ENCODE measurements at regions of chr18 and their contacts with region 1.

Region 1: GRCh38 chr18:56952026-56952425 is 194.9 kb upstream of the BOD1L2 start:
- DNase-seq: no peak
- ATAC-seq: no peak
- H3K4me3 ChIP-seq: no peak overlapping the region
- H3K27ac ChIP-seq: no peak overlapping the region
- H3K4me1 ChIP-seq: no peaks in the 10 kb centered on the region
- H3K27me3 ChIP-seq: no peaks in the 10 kb centered on the region
- CTCF ChIP-seq: no peak
- POLR2A ChIP-seq: no peak

Region 2: DNA sequence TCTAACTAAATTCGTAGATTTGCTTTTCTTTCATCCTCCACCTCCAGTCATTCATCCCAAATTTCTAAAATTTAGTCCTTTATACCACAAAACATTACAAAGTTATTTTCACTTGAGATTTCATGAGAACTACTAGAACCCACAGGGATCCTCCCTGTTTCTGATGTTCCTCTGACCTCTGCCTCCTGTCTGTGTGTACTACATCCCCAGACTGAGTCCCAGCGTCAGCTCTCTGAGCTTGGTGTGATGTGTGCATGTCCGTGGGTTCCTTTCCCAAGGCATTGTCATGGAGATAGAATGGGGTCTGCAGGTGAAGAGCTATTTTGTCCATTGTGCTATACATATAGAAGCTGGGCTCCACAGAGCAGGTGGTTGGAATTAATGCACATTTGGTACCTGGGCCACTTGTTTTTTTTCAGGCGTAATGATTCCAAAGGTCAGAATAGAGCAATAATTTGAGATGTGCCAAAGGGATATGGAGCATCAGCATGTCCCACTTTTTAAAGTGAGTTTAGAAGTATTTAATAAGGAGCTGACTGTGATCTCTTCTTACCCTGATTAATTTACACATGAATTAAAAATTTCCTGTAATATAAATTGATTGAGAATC is 43.7 kb after region 1 on chr18:
- in situ Hi-C with region 1: no loop called
- intact Hi-C with region 1: no loop called
- DNase-seq: no peak
- ATAC-seq: no peak
- H3K4me3 ChIP-seq: no peak overlapping the region
- H3K27ac ChIP-seq: no peak overlapping the region
- H3K4me1 ChIP-seq: no peaks in the 10 kb centered on the region
- H3K27me3 ChIP-seq: no peaks in the 10 kb centered on the region
- CTCF ChIP-seq: no peak
- POLR2A ChIP-seq: no peak

Region 3: DNA sequence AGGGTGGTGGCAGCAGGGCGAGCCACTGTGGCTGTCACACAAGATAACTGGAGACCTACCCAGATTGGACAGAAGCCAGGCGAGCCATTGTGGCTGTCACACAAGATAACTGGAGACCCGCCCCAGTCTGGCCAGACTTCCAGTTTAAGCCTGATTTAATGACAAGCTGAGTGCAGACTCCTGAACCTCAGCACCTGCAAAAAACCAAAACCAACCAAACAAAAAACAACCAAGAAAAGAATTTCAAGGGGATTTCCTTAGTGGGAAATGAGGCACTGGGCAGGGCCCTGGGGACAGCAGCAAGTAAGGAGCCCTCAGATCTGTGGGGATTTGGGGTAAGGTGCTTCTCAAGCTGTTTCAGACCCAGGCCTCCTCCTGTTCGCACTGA is 99.6 kb after region 1 on chr18:
- in situ Hi-C with region 1: loop called in 1 of 4 experiments (anchors 25 kb)
- intact Hi-C with region 1: no loop called
- DNase-seq: no peak
- ATAC-seq: no peak
- H3K4me3 ChIP-seq: no peak overlapping the region
- H3K27ac ChIP-seq: no peak overlapping the region
- H3K4me1 ChIP-seq: no peaks in the 10 kb centered on the region
- H3K27me3 ChIP-seq: no peaks in the 10 kb centered on the region
- CTCF ChIP-seq: no peak
- POLR2A ChIP-seq: no peak